ENCODE measurements at regions of chr2 and their contacts with region 1.

Region 1: DNA sequence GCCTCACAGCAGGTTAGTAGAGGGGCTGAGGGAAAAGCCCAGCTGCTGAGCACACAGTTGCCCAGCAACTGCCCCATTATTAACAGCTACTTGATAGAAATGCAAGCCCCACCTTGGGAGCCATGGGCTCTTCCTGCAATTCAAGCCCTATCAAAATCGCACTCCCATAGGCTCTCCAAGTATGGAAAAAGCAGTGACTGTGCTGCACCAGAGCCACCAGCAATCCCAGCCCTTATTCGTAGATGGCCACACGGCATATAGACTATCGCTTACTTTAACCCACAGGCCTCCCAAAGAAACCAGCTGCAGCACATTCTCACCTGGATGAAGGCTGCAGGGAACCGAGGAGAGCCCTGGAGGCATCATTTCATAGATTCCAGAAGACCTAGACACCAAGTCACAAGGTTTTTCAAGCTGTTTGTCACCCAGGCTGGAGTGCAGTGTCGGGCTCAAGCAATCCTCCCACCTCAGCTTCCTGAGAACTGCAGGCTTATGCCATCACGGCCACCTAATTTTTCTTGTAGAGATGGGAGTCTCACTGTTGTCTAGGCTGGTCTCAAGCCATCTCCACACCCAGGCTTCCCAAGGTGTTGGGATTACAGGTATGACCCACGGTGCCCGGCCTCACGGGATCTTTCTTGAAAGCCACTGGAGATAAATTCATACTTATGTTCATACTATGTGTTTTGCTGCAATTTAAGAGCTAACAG is 11.3 kb downstream of the NCL start:
- DNase-seq: no peak
- ATAC-seq: peak; percentile 27

Region 2: DNA sequence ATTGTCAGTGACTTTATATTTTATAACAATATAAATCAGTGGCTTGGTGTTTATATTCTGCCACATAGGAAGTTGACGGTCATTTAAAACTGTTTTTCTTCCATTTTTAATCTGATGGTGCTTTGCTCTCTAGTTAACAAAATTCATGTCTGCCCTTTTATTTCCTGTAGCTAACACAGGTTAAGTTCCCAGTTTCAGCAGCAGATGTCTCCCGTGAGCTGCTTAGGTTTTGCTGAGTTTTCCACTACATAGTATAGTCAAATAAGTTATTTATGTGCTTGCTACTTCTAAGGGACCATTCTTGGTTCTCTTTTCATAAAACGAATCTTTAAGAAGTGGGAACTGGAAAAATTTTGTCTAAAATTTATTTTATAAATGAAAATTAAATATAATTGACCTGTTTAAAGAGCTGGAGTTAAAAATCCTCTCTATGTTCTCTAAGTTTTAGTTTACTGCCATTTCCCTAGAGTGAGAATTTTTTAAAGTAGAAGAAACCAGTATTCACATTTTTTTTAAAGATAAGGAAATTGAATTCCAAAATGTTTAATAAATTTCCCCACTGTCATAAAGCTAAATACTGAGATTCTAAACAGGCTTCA is 348.7 kb before region 1 on chr2:
- intact Hi-C with region 1: loop called (anchors 5 kb)
- DNase-seq: no peak
- ATAC-seq: peak; percentile 88

Region 3: DNA sequence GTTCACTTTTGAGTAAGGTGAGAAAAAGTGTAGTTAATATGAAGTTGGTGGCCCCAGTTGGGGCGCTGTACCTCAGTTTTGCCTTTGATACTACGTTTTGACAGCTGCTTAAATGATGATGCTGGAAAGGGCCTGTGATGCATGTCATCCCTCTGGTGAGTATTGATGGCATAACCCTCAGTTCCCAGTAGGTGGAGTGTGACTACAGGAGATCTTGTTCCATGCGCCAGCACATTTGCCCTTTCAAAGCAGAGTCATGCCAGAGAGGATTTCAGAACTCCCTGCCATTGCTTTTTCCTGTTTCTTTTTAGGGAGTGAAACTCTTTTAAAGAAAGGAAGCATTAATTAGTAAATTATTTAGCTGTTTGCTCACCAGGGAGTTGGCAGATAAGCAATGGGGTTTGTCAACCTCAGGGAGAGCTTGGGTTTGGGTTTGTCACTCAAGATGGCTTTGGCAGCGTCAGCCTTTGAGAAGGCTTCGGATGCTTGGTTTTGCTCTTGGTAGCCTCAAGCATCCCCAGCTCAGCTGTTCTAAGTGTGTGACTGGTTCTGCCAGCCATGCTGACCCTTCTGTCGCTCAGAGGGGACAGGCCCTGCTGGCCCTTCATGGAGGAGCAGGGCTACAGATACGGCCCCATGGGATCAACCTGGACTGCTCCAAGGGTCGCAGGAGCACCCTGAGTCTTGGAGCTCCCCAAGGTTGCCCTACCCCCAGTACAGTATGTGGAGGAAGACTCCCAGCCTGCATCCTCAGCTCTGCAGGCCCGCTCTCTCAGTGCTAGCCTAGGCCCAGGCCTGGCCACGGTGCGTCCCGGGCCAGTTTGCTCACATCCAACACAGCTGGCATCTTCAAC is 225.4 kb before region 1 on chr2:
- intact Hi-C with region 1: loop called (anchors 5 kb)
- DNase-seq: no peak
- ATAC-seq: peak; percentile 97